ENCODE measurements at regions of chr6 and their contacts with region 1.

Region 1: DNA sequence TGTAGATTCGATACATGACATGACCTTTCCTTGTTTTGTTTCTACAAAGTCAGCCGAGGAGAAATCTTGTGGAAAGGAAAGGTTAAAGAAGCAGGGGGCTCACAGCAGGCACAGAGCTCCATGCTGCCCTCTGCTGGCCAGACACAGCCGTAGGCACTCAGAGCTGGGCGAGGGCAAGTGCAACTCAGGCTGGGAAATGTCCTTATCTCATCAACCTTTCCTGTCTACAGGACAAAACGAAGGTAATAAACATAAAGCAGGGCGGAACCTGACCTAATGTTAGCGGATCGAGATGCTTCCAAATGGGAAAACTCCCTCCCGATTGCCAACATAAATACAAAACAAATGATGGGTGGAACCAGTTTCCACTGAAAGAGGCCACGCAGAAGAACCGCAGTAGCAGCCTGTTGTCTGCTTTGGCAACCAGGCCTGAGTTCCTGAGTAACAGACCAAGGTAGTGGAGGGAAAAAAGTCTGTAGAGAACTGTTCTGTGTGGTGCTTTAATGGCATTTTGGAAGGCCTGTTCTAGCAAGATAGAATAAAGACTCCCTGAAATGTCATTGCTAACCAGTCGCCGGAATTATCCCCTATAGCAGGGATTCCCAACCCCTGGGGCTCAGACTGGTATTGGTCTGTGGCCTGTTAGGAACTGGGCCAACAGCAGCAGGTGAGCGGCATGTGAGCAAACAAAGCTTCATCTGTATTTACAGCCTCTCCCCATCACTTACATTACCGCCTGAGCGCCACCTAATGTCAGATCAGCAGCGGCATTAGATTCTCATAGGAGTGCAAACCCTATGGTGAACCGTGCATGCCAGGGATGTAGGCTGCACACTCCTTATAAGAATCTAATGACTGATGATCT is 85.2 kb downstream of the MBOAT1 start:
- DNase-seq: peak; percentile 75
- H3K4me3 Mint-ChIP-seq: no peak overlapping the region
- H3K27ac Mint-ChIP-seq: no peak overlapping the region
- H3K4me1 Mint-ChIP-seq: peaks cover 5% of the 10 kb centered on the region
- H3K27me3 Mint-ChIP-seq: no peaks in the 10 kb centered on the region

Region 2: DNA sequence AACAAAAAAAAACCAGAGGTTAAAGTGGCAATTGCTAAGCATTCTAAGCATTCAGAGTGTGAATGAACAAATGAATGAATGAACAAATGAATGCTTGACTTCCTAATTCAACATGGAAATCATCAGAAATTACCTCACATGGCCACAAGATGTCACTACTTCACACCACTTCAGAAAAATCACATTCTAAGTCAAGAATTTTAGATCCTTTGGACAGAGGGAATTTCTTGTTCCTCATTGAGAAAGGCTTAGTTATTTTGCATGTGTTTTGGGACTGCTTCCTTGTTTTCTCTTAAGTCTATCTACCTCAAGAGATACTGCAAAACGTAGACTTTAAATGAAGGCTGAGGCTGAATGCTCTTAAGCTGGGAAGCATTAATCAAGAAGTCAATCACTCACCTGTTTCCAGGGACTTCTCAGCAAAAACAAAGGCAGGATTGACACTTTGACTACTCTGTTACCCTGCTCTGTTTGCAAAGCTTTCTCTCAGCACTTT is 34.9 kb before region 1 on chr6:
- CTCF ChIA-PET with region 1: interaction called, 15 read pairs
- DNase-seq: no peak
- H3K4me3 Mint-ChIP-seq: no peak overlapping the region
- H3K27ac Mint-ChIP-seq: no peak overlapping the region
- H3K4me1 Mint-ChIP-seq: no peaks in the 10 kb centered on the region
- H3K27me3 Mint-ChIP-seq: no peaks in the 10 kb centered on the region

Region 3: GRCh38 chr6:20109526-20109925 is 17.5 kb before region 1 on chr6:
- CTCF ChIA-PET with region 1: interaction called, 12 read pairs
- DNase-seq: no peak
- H3K4me3 Mint-ChIP-seq: no peak overlapping the region
- H3K27ac Mint-ChIP-seq: no peak overlapping the region
- H3K4me1 Mint-ChIP-seq: no peaks in the 10 kb centered on the region
- H3K27me3 Mint-ChIP-seq: no peaks in the 10 kb centered on the region

Region 4: GRCh38 chr6:20212392-20213217 is 85.6 kb after region 1 on chr6 and contains the start of gene MBOAT1:
- CTCF ChIA-PET with region 1: interaction called, 10 read pairs
- DNase-seq: peak; percentile 83
- H3K4me3 Mint-ChIP-seq: peak within 1 kb of the TSS; percentile 88
- H3K27ac Mint-ChIP-seq: peak within 1 kb of the TSS; percentile 98
- H3K4me1 Mint-ChIP-seq: peaks cover 43% of the 10 kb centered on the region
- H3K27me3 Mint-ChIP-seq: peaks cover 6% of the 10 kb centered on the region